ENCODE measurements at regions of chr16 and their contacts with region 1.

Region 1: DNA sequence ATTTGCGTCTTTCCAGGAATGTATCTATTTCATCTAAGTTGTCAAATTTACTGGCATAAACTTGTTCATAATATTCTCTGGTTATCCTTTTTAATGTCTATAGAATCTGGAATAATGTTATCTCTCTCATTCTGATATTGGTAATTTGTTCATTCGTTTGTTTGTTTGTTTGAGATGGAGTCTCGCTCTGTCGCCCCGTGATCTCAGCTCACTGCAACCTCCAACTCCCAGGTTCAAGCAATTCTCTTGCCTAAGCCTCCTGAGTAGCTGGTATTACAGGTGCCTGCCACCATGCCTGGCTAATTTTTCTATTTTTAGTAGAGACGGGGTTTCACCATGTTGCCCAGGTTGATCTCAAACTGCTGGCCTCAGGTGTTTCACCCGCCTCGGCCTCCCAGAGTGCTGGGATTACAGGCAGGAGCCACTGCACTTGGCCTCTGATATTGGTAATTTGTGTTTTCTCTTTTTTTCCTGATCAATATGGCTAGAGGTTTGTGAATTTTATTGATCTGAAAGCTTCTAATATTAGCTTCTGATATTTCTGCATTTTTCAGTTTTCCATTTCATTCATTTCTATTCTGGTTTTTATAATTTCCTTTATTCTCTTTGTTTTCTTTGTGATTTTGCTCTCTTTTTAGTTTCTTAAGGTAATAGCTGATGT is 59.5 kb downstream of the RBBP6 start:
- DNase-seq: no peak
- ATAC-seq: no peak
- H3K4me3 ChIP-seq: no peak overlapping the region
- H3K27ac ChIP-seq: no peak overlapping the region
- H3K4me1 ChIP-seq: no peaks in the 10 kb centered on the region
- H3K27me3 ChIP-seq: no peaks in the 10 kb centered on the region; the same call in 1 of the 2 replicates
- CTCF ChIP-seq: no peak
- POLR2A ChIP-seq: no peak
- RAD21 ChIP-seq: no peak

Region 2: GRCh38 chr16:24652803-24653202 is 53.9 kb after region 1 on chr16:
- CTCF ChIA-PET with region 1: no interaction called
- POLR2A ChIA-PET with region 1: no interaction called
- dilution Hi-C with region 1: no loop called
- in situ Hi-C with region 1: no loop called
- intact Hi-C with region 1: loop called (anchors 2 kb)
- DNase-seq: peak; percentile 31
- ATAC-seq: no peak; the same call in none of the 2 replicates
- H3K4me3 ChIP-seq: no peak overlapping the region
- H3K27ac ChIP-seq: no peak overlapping the region
- H3K4me1 ChIP-seq: peaks cover 8% of the 10 kb centered on the region
- H3K27me3 ChIP-seq: no peaks in the 10 kb centered on the region
- CTCF ChIP-seq: no peak
- POLR2A ChIP-seq: no peak
- RAD21 ChIP-seq: no peak